A549 (cell line): ENCODE measurements at regions of chr5 and their contacts with region 1.

Region 1: GRCh38 chr5:43631182-43631910 is 28.4 kb downstream of the NNT start:
- DNase-seq: peak; percentile 47 to 78
- ATAC-seq: peak; percentile 94 to 98
- H3K4me3 ChIP-seq: no peak overlapping the region
- H3K27ac ChIP-seq: no peak overlapping the region
- H3K4me1 ChIP-seq: no peaks in the 10 kb centered on the region
- CTCF ChIP-seq: peak; percentile 77
- EP300 ChIP-seq: no peak
- POLR2A ChIP-seq: no peak
- RAD21 ChIP-seq: peak; percentile 55 to 63

Region 2: DNA sequence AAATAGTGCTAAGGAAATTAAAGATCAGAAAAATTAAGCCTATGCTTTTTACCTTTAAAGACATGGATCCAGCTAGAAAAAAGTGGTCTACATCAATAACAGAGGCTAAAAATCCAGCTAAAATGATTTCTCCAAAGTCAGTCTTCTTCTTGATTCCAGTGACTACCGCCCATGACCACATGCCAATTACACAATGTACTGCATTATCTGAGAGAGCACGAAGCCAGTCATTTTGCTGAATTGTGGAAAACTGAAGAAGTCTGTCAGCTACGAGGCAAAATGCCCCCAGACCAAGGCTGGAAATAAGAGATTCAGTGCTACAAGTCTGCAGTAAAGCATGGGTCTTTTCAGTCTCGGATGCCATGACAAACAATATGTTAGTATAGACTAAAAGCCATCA is 177.7 kb before region 1 on chr5:
- CTCF ChIA-PET with region 1: no interaction called
- POLR2A ChIA-PET with region 1: no interaction called
- DNase-seq: no peak
- ATAC-seq: no peak
- H3K4me3 ChIP-seq: no peak overlapping the region
- H3K27ac ChIP-seq: no peak overlapping the region
- H3K4me1 ChIP-seq: no peaks in the 10 kb centered on the region
- CTCF ChIP-seq: no peak
- EP300 ChIP-seq: no peak
- POLR2A ChIP-seq: no peak
- RAD21 ChIP-seq: no peak

Region 3: DNA sequence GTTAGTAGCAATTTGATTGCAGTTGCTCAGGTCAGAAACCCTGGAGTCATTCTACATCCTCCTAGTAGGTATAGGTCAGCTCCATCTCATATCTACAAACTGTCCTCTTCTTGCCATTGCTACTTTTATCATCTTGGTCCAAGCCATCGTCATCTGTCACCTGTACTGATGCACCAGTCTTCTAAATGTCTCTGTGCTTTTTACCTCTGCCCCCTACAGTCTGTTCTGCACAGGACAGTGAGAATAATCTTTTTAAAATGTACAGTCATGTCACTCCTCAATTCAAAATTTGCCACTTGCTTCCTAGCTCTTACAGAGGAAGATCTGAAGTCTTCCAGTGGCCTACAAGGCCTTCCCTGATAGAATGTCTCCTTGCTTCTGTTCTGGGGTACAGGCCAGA is 21.6 kb before region 1 on chr5:
- CTCF ChIA-PET with region 1: interaction called, 20 read pairs
- POLR2A ChIA-PET with region 1: no interaction called
- DNase-seq: peak in 1 of 2 experiments; percentile 27
- ATAC-seq: peak; percentile 76 to 81; a peak in 5 of 6 replicates
- H3K4me3 ChIP-seq: no peak overlapping the region
- H3K27ac ChIP-seq: no peak overlapping the region
- H3K4me1 ChIP-seq: no peaks in the 10 kb centered on the region
- CTCF ChIP-seq: no peak; the same call in 2 of the 3 replicates
- EP300 ChIP-seq: no peak
- POLR2A ChIP-seq: no peak
- RAD21 ChIP-seq: peak in 1 of 2 experiments; percentile 23; a peak in 1 of 5 replicates

Region 4: DNA sequence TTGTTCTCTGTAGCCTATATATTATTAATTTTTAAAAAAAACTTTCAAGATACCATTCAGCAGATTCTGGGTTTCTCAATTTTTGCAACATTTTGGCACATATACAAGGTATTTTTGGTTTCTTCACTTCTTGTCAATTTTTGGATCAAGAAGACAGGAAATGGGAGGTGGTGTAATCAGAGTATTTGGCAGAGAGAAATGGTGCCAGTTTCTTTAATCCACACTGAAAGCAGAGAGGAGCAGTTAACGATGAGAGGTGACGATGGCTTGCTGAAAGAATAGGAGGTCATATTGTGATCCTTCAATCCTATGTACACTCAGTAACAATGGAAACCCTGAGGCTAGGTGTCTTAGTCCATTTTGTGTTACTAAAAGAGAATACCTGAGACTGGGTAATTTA is 12.0 kb before region 1 on chr5:
- CTCF ChIA-PET with region 1: interaction called, 26 read pairs
- POLR2A ChIA-PET with region 1: no interaction called
- DNase-seq: no peak
- ATAC-seq: no peak
- H3K4me3 ChIP-seq: no peak overlapping the region
- H3K27ac ChIP-seq: no peak overlapping the region
- H3K4me1 ChIP-seq: no peaks in the 10 kb centered on the region
- CTCF ChIP-seq: no peak
- EP300 ChIP-seq: no peak
- POLR2A ChIP-seq: no peak
- RAD21 ChIP-seq: no peak

Region 5: DNA sequence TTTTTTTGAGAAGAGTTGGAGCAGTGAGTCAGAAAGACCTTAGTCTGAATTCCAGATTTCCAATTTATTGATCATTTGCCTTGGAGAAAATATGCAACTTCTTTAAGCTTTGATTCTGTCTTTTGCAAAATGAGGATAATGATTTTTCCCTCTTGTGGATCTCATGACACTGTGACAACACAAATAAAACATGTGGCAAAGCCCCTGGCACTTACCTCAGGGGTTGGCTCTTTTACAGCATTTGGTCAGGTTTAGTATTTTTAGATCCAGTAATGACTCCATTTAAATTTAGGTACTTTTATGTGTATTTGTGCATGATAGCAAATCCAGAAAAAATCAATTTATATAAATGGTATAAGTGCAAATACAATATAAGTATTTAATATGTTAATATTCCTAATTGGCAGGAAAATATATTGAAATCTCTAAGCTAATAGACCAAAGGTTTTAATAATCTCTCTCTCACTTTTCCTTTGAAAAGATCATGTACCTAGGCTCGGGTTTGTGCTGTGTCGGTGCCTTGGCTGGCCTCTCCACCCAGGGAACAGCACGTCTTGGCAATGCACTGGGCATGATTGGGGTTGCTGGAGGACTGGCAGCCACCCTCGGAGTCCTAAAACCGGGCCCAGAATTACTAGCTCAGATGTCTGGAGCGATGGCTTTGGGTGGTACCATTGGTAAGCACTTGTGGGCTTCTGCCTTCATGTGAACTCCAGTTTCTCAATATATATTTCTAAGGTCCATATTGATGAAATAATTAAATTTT is 21.4 kb after region 1 on chr5:
- CTCF ChIA-PET with region 1: interaction called, 10 read pairs
- POLR2A ChIA-PET with region 1: interaction called, 3 read pairs
- DNase-seq: no peak
- ATAC-seq: no peak
- H3K4me3 ChIP-seq: no peak overlapping the region
- H3K27ac ChIP-seq: no peak overlapping the region
- H3K4me1 ChIP-seq: no peaks in the 10 kb centered on the region
- CTCF ChIP-seq: no peak
- EP300 ChIP-seq: no peak
- POLR2A ChIP-seq: no peak
- RAD21 ChIP-seq: no peak